ENCODE measurements at regions of chr11 and their contacts with region 1.

Region 1: DNA sequence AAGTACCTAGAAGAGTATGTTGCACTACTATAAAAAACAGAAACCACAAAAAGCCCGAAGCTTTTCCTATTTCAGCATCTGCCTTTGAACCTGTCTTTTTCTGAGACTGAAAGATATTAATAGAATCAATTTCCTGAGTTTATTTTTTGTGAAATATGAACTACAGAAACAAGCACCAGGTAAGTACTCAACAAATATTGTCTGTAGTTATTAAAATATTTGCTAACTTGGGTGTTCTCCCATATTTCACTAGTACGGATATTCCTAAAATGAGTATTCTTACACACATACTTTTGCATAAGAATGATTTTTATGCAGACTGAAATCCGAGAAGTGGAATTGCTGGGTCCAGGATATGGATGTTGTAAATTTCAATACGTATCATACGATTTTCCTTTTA is 188.0 kb downstream of the OR4C45 start:
- DNase-seq: no peak
- ATAC-seq: no peak
- H3K4me3 ChIP-seq: no peak overlapping the region
- H3K27ac ChIP-seq: no peak overlapping the region
- H3K4me1 ChIP-seq: no peaks in the 10 kb centered on the region
- H3K27me3 ChIP-seq: no peaks in the 10 kb centered on the region
- CTCF ChIP-seq: no peak
- EP300 ChIP-seq: no peak
- POLR2A ChIP-seq: no peak
- RAD21 ChIP-seq: no peak

Region 2: GRCh38 chr11:50275179-50275578 is 54.5 kb after region 1 on chr11:
- CTCF ChIA-PET with region 1: no interaction called
- POLR2A ChIA-PET with region 1: no interaction called
- RAD21 ChIA-PET with region 1: no interaction called
- SMC1A ChIA-PET with region 1: no interaction called
- in situ Hi-C with region 1: no loop called
- intact Hi-C with region 1: loop called (anchors 10 kb)
- DNase-seq: no peak
- ATAC-seq: no peak
- H3K4me3 ChIP-seq: no peak overlapping the region
- H3K27ac ChIP-seq: no peak overlapping the region
- H3K4me1 ChIP-seq: no peaks in the 10 kb centered on the region
- H3K27me3 ChIP-seq: no peaks in the 10 kb centered on the region
- CTCF ChIP-seq: no peak
- EP300 ChIP-seq: no peak
- POLR2A ChIP-seq: no peak
- RAD21 ChIP-seq: no peak

Region 3: GRCh38 chr11:50379484-50379883 is 158.8 kb after region 1 on chr11:
- CTCF ChIA-PET with region 1: no interaction called
- POLR2A ChIA-PET with region 1: no interaction called
- RAD21 ChIA-PET with region 1: no interaction called
- SMC1A ChIA-PET with region 1: no interaction called
- in situ Hi-C with region 1: no loop called
- intact Hi-C with region 1: loop called (anchors 10 kb)
- DNase-seq: no peak
- ATAC-seq: no peak
- H3K4me3 ChIP-seq: no peak overlapping the region
- H3K27ac ChIP-seq: no peak overlapping the region
- H3K4me1 ChIP-seq: no peaks in the 10 kb centered on the region
- H3K27me3 ChIP-seq: no peaks in the 10 kb centered on the region
- CTCF ChIP-seq: no peak
- EP300 ChIP-seq: no peak
- POLR2A ChIP-seq: no peak
- RAD21 ChIP-seq: no peak